MCF 10A (cell line): ENCODE measurements at regions of chr17 and their contacts with region 1.

Region 1: GRCh38 chr17:79393358-79394202 is 217.3 kb downstream of the RBFOX3 start:
- DNase-seq: peak; percentile 63
- H3K4me3 Mint-ChIP-seq: no peak overlapping the region
- H3K27ac Mint-ChIP-seq: no peak overlapping the region
- H3K4me1 Mint-ChIP-seq: no peaks in the 10 kb centered on the region
- H3K27me3 Mint-ChIP-seq: peaks cover 91% of the 10 kb centered on the region
- CTCF ChIP-seq: peak; percentile 91

Region 2: DNA sequence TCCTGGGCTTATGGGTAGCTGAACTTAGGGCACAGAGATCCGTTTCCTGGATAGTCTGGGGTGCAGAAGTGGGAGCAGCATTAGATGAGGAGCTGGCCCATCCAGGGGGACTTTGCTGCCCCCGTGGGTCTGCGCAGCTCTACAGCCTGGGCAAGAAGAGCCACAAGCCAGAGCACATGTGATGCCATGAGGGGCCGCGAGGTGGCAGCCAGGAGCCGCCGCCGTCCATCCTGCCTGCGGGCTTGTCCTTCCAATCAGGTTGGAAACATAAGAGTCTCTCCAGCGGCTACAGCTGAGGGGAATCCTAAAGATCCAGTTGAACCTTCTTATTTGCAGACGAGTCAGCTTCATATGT is 347.8 kb before region 1 on chr17:
- CTCF ChIA-PET with region 1: interaction called, 25 read pairs
- POLR2A ChIA-PET with region 1: interaction called, 3 read pairs
- intact Hi-C with region 1: loop called (anchors 1 kb)
- DNase-seq: peak; percentile 75
- H3K4me3 Mint-ChIP-seq: no peak overlapping the region
- H3K27ac Mint-ChIP-seq: no peak overlapping the region
- H3K4me1 Mint-ChIP-seq: peaks cover 17% of the 10 kb centered on the region
- H3K27me3 Mint-ChIP-seq: peaks cover 30% of the 10 kb centered on the region
- CTCF ChIP-seq: peak; percentile 92

Region 3: DNA sequence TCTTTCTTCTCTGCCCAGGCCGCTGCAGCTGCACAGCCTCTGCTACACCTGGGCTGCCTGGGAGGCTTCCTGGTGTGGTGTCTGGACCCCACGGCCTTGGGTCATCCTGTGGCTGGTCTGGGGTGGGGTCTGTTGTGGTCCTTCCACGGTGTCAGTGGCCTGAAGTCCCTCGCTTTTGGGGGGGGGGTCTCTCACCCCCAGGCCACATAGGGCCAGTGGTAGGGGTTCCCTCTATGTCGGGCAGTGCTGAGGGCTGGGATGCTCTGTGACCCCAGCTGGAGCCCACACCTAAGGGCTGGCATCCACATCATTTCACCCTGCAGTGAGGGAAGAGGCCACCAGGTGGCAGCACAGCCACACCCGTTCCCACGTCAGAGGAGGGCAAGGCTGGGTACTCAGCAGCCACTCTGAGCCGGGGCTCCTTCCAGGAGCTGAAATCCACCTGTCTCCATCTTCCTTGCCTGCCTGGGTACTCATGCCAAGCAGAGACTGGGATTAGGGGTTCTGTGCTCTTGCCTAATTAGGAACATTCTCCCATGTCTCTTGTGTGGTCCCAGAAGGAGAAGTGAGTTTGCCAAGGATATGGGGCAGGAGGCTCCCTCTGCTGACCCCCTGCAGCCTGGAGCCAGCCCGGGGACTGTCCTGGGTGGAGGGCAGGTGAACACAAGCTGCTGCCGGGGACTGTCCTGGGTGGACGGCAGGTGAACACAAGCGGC is 306.0 kb before region 1 on chr17:
- CTCF ChIA-PET with region 1: interaction called, 273 read pairs
- POLR2A ChIA-PET with region 1: interaction called, 12 read pairs
- intact Hi-C with region 1: loop called (anchors 1 kb)
- DNase-seq: peak; percentile 70
- H3K4me3 Mint-ChIP-seq: no peak overlapping the region
- H3K27ac Mint-ChIP-seq: no peak overlapping the region
- H3K4me1 Mint-ChIP-seq: no peaks in the 10 kb centered on the region
- H3K27me3 Mint-ChIP-seq: peaks cover 7% of the 10 kb centered on the region
- CTCF ChIP-seq: peak; percentile 74

Region 4: GRCh38 chr17:79231766-79232287 is 161.8 kb before region 1 on chr17:
- CTCF ChIA-PET with region 1: interaction called, 15 read pairs
- POLR2A ChIA-PET with region 1: interaction called, 12 read pairs
- intact Hi-C with region 1: no loop called
- DNase-seq: peak; percentile 37
- H3K4me3 Mint-ChIP-seq: no peak overlapping the region
- H3K27ac Mint-ChIP-seq: peak overlapping the region; percentile 68
- H3K4me1 Mint-ChIP-seq: peaks cover 17% of the 10 kb centered on the region
- H3K27me3 Mint-ChIP-seq: no peaks in the 10 kb centered on the region
- CTCF ChIP-seq: no peak

Region 5: GRCh38 chr17:79707931-79708891 is 314.6 kb after region 1 on chr17:
- CTCF ChIA-PET with region 1: interaction called, 5 read pairs
- POLR2A ChIA-PET with region 1: interaction called, 5 read pairs
- intact Hi-C with region 1: loop called (anchors 2 kb)
- DNase-seq: peak; percentile 43
- H3K4me3 Mint-ChIP-seq: no peak overlapping the region
- H3K27ac Mint-ChIP-seq: no peak overlapping the region
- H3K4me1 Mint-ChIP-seq: peaks cover 10% of the 10 kb centered on the region
- H3K27me3 Mint-ChIP-seq: peaks cover 10% of the 10 kb centered on the region
- CTCF ChIP-seq: peak; percentile 71